ENCODE measurements at regions of chr20 and their contacts with region 1.

Region 1: DNA sequence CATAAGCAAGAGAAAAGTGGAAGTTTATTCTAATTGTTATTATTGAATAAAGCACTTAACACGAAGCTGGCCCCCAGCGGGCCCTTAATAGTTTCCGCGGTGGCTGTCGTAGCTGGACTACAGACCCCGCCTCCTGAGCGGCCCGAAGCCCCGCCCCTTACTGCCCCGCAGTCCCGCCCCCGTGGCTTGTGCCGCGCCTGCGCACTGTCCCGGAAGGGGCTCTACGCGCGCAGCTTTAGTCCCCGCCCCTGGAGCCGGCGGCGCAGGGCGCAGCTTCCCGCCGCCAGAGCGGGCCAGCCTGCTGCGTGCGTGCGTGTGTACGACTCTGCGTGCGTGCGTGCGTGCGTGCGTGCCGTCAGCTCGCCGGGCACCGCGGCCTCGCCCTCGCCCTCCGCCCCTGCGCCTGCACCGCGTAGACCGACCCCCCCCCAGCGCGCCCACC is at the start of gene VAPB:
- DNase-seq: peak; percentile 99
- ATAC-seq: peak; percentile 97
- H3K4me3 Mint-ChIP-seq: peak within 1 kb of the TSS; percentile 91
- H3K27ac Mint-ChIP-seq: peak within 1 kb of the TSS; percentile 85
- H3K4me1 Mint-ChIP-seq: peaks cover 37% of the 10 kb centered on the region
- H3K27me3 Mint-ChIP-seq: peaks cover 4% of the 10 kb centered on the region
- CTCF ChIP-seq: no peak
- total RNA-seq, gene VAPB: 20.6 and 26.2 TPM in 2 replicates

Region 2: DNA sequence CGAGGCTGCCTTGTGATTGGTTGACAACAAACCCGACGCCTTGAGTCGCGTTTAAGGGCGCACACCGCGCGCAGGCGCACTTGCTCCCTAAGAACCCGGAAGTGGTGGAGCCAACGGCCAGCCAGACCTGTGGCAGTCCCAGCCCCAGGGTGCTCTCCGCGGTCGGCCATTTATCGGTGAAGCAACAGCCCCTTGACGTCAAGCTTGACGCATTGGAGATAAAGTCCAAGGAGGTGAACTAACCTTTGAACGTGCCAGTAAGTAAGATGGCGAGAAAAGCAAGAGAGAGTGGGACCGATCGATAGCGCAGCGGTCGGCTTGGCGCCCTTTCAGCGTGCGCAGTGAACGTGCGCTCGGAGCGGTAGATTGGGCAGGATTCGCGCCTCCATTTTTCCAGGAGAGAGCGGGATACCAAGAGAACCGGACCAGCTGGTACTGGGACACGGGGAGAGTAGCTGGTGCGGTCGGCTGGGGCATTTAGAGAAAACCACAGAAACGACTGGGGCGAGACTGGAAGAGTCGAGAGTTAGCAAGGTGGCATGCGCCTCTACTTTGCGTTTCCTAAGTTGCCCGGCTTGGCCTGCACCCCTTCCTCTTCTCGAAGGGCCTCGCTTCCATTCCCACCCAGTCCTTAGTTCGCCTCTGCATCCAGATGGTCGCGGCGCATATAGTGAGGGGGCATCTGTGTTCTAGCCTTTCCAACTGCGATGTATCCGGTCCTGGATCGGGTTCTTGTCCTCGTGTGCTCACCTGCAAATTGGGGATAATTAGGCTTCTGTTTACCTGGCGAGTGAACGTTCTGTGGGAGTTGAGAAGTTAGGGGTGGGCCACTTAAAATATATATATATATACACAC is 1996.4 kb before region 1 on chr20 and contains the start of gene CSTF1:
- CTCF ChIA-PET with region 1: no interaction called
- POLR2A ChIA-PET with region 1: interaction called, 3 read pairs
- intact Hi-C with region 1: loop called (anchors 5 kb)
- DNase-seq: peak; percentile 96
- ATAC-seq: peak; percentile 93
- H3K4me3 Mint-ChIP-seq: no peak within 1 kb of the TSS
- H3K27ac Mint-ChIP-seq: no peak within 1 kb of the TSS
- H3K4me1 Mint-ChIP-seq: peaks cover 22% of the 10 kb centered on the region
- H3K27me3 Mint-ChIP-seq: no peaks in the 10 kb centered on the region
- CTCF ChIP-seq: no peak
- total RNA-seq, gene CSTF1: 31.4 and 36.2 TPM in 2 replicates

Region 3: DNA sequence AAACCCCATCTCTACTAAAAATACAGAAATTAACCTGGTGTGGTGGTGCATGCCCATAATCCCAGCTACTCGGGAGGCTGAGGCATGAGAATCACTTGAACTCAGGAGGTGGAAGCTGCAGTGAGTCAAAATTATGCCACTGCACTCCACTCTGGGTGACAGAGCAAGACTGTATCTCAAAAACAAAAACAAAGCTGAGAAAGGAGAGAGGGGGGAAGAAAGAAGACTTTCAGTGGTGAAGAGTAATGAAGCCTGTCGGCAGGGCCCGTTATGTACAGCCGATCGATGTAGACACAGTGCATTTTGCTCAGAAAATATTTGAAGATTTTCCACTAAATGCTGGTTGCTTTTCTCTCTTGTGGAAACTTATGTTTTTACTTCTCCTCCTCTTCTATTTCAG is 13.9 kb after region 1 on chr20:
- CTCF ChIA-PET with region 1: interaction called, 3 read pairs
- POLR2A ChIA-PET with region 1: interaction called, 8 read pairs
- intact Hi-C with region 1: loop called (anchors 2 kb)
- DNase-seq: no peak
- ATAC-seq: peak; percentile 69
- H3K4me3 Mint-ChIP-seq: no peak overlapping the region
- H3K27ac Mint-ChIP-seq: no peak overlapping the region
- H3K4me1 Mint-ChIP-seq: peaks cover 39% of the 10 kb centered on the region
- H3K27me3 Mint-ChIP-seq: no peaks in the 10 kb centered on the region
- CTCF ChIP-seq: no peak

Region 4: GRCh38 chr20:58458180-58459057 is 69.5 kb after region 1 on chr20:
- CTCF ChIA-PET with region 1: interaction called, 6 read pairs
- POLR2A ChIA-PET with region 1: interaction called, 9 read pairs
- intact Hi-C with region 1: loop called (anchors 1 kb)
- DNase-seq: peak; percentile 58
- ATAC-seq: peak; percentile 99
- H3K4me3 Mint-ChIP-seq: peak overlapping the region; percentile 53
- H3K27ac Mint-ChIP-seq: peak overlapping the region; percentile 74
- H3K4me1 Mint-ChIP-seq: peaks cover 30% of the 10 kb centered on the region
- H3K27me3 Mint-ChIP-seq: no peaks in the 10 kb centered on the region
- CTCF ChIP-seq: no peak

Measured in activated B cell treated with CpG ODN at 0.5 μM for 24 hours (primary cell).